ENCODE measurements at regions of chr7 and their contacts with region 1.

Region 1: DNA sequence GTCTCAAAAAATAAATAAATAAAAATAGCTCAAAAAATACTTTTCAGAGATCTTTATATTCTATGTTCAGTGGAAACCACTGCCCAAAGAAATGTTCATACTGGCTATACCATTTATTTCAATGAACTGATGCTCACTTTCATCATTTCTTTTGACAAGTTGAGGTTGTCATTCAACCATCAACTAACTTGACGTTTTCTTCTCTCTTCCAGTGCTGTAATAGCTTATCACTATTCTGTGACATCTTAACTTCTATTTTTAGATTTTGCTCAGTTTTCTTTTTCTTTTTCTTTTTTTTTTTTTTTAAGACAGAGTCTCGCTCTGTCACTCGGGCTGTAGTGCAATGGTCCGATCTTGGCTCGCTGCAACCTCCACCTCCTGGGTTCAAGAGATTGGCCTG is 8.7 kb upstream of the CTAGE4 start:
- DNase-seq: no peak

Region 2: GRCh38 chr7:144391823-144392255 is 217.2 kb after region 1 on chr7:
- intact Hi-C with region 1: loop called (anchors 10 kb)
- DNase-seq: no peak

Measured in posterior cingulate gyrus (tissue), 11 donors.